OCI-LY7 (cell line): ENCODE measurements at regions of chr7 and their contacts with region 1.

Region 1: DNA sequence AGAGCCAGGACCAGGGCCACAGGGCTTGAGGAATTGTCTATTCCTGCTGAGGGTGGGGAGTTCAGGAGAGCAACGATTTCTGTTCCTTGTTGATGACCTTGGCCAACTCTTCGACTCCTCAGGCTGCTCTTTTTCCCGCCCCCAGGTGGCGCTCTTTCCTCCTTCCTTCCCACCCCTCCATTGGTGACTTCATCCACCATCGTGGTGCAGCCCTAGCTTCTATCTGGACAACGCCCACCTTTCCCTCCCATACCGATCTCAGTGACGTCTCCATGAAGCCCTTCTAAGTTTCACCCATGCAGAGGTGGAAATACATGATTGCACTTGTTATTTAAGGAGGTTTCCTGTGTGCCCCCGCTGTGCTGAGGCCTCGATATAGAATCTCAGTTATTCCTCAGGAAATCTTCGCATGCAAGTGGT is 22.1 kb upstream of the CARD11 start:
- DNase-seq: peak; percentile 60
- H3K4me3 ChIP-seq: no peak overlapping the region
- H3K27ac ChIP-seq: no peak overlapping the region
- H3K4me1 ChIP-seq: no peaks in the 10 kb centered on the region
- CTCF ChIP-seq: peak; percentile 90

Region 2: GRCh38 chr7:2886900-2887299 is 178.8 kb before region 1 on chr7:
- CTCF ChIA-PET with region 1: no interaction called
- POLR2A ChIA-PET with region 1: interaction called, 3 read pairs
- intact Hi-C with region 1: loop called (anchors 1 kb)
- DNase-seq: peak; percentile 84
- H3K4me3 ChIP-seq: no peak overlapping the region
- H3K27ac ChIP-seq: no peak overlapping the region
- H3K4me1 ChIP-seq: peaks cover 27% of the 10 kb centered on the region
- CTCF ChIP-seq: peak; percentile 95